Activated CD4-positive, alpha-beta T cell treated with anti-CD3 and anti-CD28 coated beads for 36 hours (primary cell): ENCODE measurements at regions of chr3 and their contacts with region 1.

Region 1: GRCh38 chr3:71305231-71306206 is 278.0 kb downstream of the FOXP1 start:
- DNase-seq: peak; percentile 38
- ATAC-seq: peak; percentile 8
- H3K4me3 Mint-ChIP-seq: peak overlapping the region; percentile 80
- H3K27ac Mint-ChIP-seq: peak overlapping the region; percentile 96
- H3K4me1 Mint-ChIP-seq: peaks cover 81% of the 10 kb centered on the region
- H3K27me3 Mint-ChIP-seq: no peaks in the 10 kb centered on the region

Region 2: DNA sequence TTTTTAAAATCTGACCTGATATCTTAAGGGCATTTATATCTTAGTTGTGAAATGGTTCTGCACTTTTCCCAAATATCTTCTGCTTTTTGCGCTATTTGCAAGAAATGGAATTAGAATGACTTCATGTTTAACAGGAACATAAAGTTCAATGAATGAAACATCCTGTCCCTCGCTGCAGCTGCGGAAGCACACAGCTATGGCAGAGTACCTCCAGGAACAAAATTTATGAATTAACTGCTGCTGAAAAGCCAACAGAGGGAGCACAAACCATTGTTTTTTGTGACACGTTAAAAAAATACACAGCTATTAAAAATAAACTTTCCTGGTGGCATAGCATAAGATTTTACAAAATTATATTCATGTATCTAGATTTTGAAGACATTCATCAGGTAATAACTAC is 588.7 kb before region 1 on chr3:
- CTCF ChIA-PET with region 1: no interaction called
- POLR2A ChIA-PET with region 1: no interaction called
- intact Hi-C with region 1: loop called in 1 of 2 experiments (anchors 2 kb)
- DNase-seq: peak; percentile 10
- ATAC-seq: no peak
- H3K4me3 Mint-ChIP-seq: no peak overlapping the region
- H3K27ac Mint-ChIP-seq: no peak overlapping the region
- H3K4me1 Mint-ChIP-seq: no peaks in the 10 kb centered on the region
- H3K27me3 Mint-ChIP-seq: peaks cover 3% of the 10 kb centered on the region

Region 3: DNA sequence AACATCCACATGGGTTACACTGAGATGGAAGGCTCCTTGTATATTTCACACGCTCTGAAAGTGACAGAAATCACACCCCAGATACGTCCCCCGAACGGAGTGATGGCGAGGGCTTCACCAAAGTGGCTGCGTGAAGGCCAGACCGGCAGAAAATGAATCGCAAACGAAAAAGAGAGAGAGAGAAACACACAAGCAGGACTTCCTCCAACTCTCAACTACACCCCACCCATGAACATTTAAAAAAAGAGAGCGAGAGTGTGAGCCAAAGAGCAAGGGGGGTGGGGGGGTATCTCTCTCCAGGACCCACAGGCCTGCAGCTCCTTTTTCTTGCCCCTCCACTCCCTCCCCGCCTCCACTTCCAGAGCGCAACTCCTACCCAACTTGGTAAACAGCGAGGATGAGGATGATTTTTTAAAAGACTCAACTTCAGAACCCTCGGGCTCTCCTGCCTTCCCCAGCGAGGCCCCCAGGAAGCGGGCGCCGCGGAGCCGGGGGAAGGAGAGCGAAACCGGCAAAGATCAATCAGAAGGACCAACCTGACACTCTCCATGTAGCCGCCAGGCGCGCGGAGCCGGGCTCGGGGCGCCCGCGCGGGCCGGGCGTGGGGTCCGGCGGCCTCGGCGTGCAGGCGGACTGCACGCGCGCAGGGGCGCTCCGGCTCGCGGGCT is 241.1 kb before region 1 on chr3:
- CTCF ChIA-PET with region 1: interaction called, 11 read pairs
- POLR2A ChIA-PET with region 1: interaction called, 11 read pairs
- intact Hi-C with region 1: loop called (anchors 1 kb)
- DNase-seq: peak; percentile 79
- ATAC-seq: peak; percentile 11
- H3K4me3 Mint-ChIP-seq: no peak overlapping the region
- H3K27ac Mint-ChIP-seq: no peak overlapping the region
- H3K4me1 Mint-ChIP-seq: peaks cover 63% of the 10 kb centered on the region
- H3K27me3 Mint-ChIP-seq: no peaks in the 10 kb centered on the region

Region 4: GRCh38 chr3:71360764-71361163 is 55.2 kb after region 1 on chr3:
- CTCF ChIA-PET with region 1: interaction called, 3 read pairs
- POLR2A ChIA-PET with region 1: interaction called, 12 read pairs
- intact Hi-C with region 1: loop called (anchors 1 kb)
- DNase-seq: peak; percentile 48
- ATAC-seq: peak; percentile 67
- H3K4me3 Mint-ChIP-seq: peak overlapping the region; percentile 50
- H3K27ac Mint-ChIP-seq: peak overlapping the region; percentile 88
- H3K4me1 Mint-ChIP-seq: peaks cover 86% of the 10 kb centered on the region
- H3K27me3 Mint-ChIP-seq: no peaks in the 10 kb centered on the region

Region 5: DNA sequence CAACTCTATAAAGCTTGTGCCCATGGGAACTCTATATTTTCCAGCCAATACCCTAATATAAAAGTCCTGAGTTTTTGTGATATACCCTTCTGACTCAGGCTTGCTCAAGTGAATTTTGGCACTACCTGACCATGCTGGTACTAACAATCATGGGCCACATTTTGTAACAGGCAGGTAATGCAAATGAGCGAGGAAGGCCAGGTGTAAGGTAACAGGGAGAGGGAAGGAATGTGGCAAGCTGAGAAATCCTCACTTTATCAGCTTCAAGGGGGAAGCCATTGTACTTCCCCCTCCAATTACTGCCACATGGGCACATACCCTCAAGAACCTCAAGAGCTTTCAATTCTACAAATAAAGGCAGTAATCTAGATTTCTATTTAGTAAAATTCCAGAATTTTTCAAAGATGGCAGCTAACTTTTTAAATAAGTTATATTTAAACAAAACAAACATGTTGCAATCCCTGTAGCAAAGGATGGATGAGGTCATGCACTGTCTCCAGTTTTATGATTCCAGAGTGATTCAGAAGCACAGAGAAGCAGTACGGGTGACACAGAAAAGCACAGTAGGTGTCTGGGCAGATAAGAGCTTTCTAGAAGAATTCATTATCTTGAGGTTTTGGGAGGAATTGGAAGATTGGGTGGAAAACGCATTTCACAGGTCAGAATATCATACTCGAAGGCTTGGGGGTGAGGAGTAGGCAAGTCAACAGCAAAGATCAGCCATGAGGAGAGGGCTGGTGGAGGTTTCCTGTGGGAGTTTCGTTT is 190.4 kb after region 1 on chr3:
- CTCF ChIA-PET with region 1: no interaction called
- POLR2A ChIA-PET with region 1: no interaction called
- intact Hi-C with region 1: loop called in 1 of 2 experiments (anchors 5 kb)
- DNase-seq: peak; percentile 47
- ATAC-seq: peak; percentile 71
- H3K4me3 Mint-ChIP-seq: peak overlapping the region; percentile 56
- H3K27ac Mint-ChIP-seq: peak overlapping the region; percentile 89
- H3K4me1 Mint-ChIP-seq: peaks cover 75% of the 10 kb centered on the region
- H3K27me3 Mint-ChIP-seq: no peaks in the 10 kb centered on the region